ENCODE measurements at regions of chr6 and their contacts with region 1.

Region 1: GRCh38 chr6:19193624-19194023 is 643.5 kb upstream of the ID4 start:
- DNase-seq: no peak
- ATAC-seq: no peak
- H3K4me3 ChIP-seq: no peak overlapping the region
- H3K27ac ChIP-seq: no peak overlapping the region
- H3K4me1 ChIP-seq: no peaks in the 10 kb centered on the region
- H3K27me3 ChIP-seq: no peaks in the 10 kb centered on the region
- CTCF ChIP-seq: no peak
- POLR2A ChIP-seq: no peak
- RAD21 ChIP-seq: no peak

Region 2: GRCh38 chr6:19042420-19042819 is 151.2 kb before region 1 on chr6:
- CTCF ChIA-PET with region 1: no interaction called
- POLR2A ChIA-PET with region 1: no interaction called
- dilution Hi-C with region 1: no loop called
- in situ Hi-C with region 1: no loop called
- intact Hi-C with region 1: no loop called
- DNase-seq: no peak
- ATAC-seq: no peak
- H3K4me3 ChIP-seq: no peak overlapping the region
- H3K27ac ChIP-seq: no peak overlapping the region
- H3K4me1 ChIP-seq: no peaks in the 10 kb centered on the region
- H3K27me3 ChIP-seq: no peaks in the 10 kb centered on the region
- CTCF ChIP-seq: no peak
- POLR2A ChIP-seq: no peak
- RAD21 ChIP-seq: no peak

Region 3: DNA sequence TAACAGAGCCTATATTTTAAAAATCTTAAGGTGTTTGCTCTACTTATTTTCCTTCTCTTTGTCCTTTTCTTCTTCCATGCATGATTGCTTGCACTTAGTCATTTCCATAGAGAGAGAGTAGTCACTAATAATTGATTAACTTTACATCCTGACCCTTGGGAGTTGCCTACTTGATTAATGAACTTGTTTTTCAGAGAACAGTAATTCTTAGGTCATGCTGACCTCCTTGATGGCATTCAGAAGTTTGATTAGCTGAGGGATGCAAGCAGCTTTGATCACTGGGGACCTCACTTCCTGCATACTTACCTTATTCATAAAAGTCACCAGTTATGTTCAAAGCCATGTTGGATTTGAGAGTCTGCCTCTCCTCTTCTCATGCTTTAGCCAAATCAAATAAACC is 72.1 kb before region 1 on chr6:
- CTCF ChIA-PET with region 1: no interaction called
- POLR2A ChIA-PET with region 1: no interaction called
- dilution Hi-C with region 1: no loop called
- in situ Hi-C with region 1: no loop called
- intact Hi-C with region 1: no loop called
- DNase-seq: no peak
- ATAC-seq: no peak
- H3K4me3 ChIP-seq: no peak overlapping the region
- H3K27ac ChIP-seq: no peak overlapping the region
- H3K4me1 ChIP-seq: no peaks in the 10 kb centered on the region
- H3K27me3 ChIP-seq: no peaks in the 10 kb centered on the region
- CTCF ChIP-seq: no peak
- POLR2A ChIP-seq: no peak
- RAD21 ChIP-seq: no peak

Region 4: GRCh38 chr6:19231878-19232561 is 38.4 kb after region 1 on chr6:
- CTCF ChIA-PET with region 1: no interaction called
- POLR2A ChIA-PET with region 1: no interaction called
- dilution Hi-C with region 1: no loop called
- in situ Hi-C with region 1: no loop called
- intact Hi-C with region 1: loop called (anchors 1 kb)
- DNase-seq: no peak
- ATAC-seq: no peak
- H3K4me3 ChIP-seq: no peak overlapping the region
- H3K27ac ChIP-seq: no peak overlapping the region
- H3K4me1 ChIP-seq: no peaks in the 10 kb centered on the region
- H3K27me3 ChIP-seq: no peaks in the 10 kb centered on the region
- CTCF ChIP-seq: no peak
- POLR2A ChIP-seq: no peak
- RAD21 ChIP-seq: no peak

Region 5: GRCh38 chr6:19268115-19268514 is 74.5 kb after region 1 on chr6:
- CTCF ChIA-PET with region 1: no interaction called
- POLR2A ChIA-PET with region 1: no interaction called
- dilution Hi-C with region 1: no loop called
- in situ Hi-C with region 1: no loop called
- intact Hi-C with region 1: no loop called
- DNase-seq: no peak
- ATAC-seq: no peak
- H3K4me3 ChIP-seq: no peak overlapping the region
- H3K27ac ChIP-seq: no peak overlapping the region
- H3K4me1 ChIP-seq: no peaks in the 10 kb centered on the region
- H3K27me3 ChIP-seq: no peaks in the 10 kb centered on the region
- CTCF ChIP-seq: no peak
- POLR2A ChIP-seq: no peak
- RAD21 ChIP-seq: no peak

Measured in IMR-90 (cell line).